Common myeloid progenitor, CD34-positive (primary cell): ENCODE measurements at regions of chr7 and their contacts with region 1.

Region 1: GRCh38 chr7:94087664-94088352 is 83.7 kb upstream of the BET1 start:
- DNase-seq: peak; percentile 64 to 78 (median 64)
- H3K4me3 ChIP-seq: peak overlapping the region in 1 of 7 experiments; percentile 50
- H3K27ac ChIP-seq: no peak overlapping the region
- H3K4me1 ChIP-seq: peaks cover 0 to 10% (median 5%) of the 10 kb centered on the region in 4 experiments
- H3K27me3 ChIP-seq: peaks cover 0 to 83% (median 28%) of the 10 kb centered on the region in 5 experiments

Region 2: GRCh38 chr7:93910076-93910994 is 177.5 kb before region 1 on chr7:
- CTCF ChIA-PET with region 1: interaction called, 12 read pairs
- POLR2A ChIA-PET with region 1: no interaction called
- DNase-seq: no peak
- H3K4me3 ChIP-seq: no peak overlapping the region
- H3K27ac ChIP-seq: no peak overlapping the region
- H3K4me1 ChIP-seq: no peaks in the 10 kb centered on the region
- H3K27me3 ChIP-seq: peaks cover 0 to 46% (median 7%) of the 10 kb centered on the region in 5 experiments

Region 3: GRCh38 chr7:93921607-93922566 is 165.9 kb before region 1 on chr7 and contains the start of gene GNG11:
- CTCF ChIA-PET with region 1: interaction called, 14 read pairs
- POLR2A ChIA-PET with region 1: no interaction called
- DNase-seq: peak; percentile 81 to 88 (median 85)
- H3K4me3 ChIP-seq: peak within 1 kb of the TSS; percentile 17 to 91 (median 80)
- H3K27ac ChIP-seq: peak within 1 kb of the TSS; percentile 60 to 78
- H3K4me1 ChIP-seq: peaks cover 10 to 29% (median 15%) of the 10 kb centered on the region in 4 experiments
- H3K27me3 ChIP-seq: peaks cover 0 to 48% (median 0%) of the 10 kb centered on the region in 5 experiments

Region 4: DNA sequence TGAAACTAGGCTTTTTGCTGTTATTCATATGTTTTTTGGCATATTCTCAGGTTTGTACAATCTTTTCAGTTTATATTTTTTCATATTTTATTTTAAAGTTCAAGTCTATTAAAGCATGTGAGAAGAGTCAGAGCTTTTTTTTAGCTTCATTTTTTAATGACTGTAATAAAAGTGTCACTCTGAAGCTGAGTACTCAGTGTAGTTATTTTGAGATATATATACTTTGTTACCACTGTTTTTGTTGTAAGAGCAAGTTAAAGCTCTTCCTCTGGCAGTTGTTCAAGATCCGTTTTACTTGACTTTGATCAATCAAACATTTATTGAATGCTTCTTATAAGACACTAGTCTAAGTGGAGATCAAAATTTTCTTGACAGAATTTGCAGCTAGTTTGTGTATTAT is 459.3 kb after region 1 on chr7:
- CTCF ChIA-PET with region 1: no interaction called
- POLR2A ChIA-PET with region 1: no interaction called
- DNase-seq: no peak
- H3K4me3 ChIP-seq: no peak overlapping the region
- H3K27ac ChIP-seq: no peak overlapping the region
- H3K4me1 ChIP-seq: no peaks in the 10 kb centered on the region
- H3K27me3 ChIP-seq: no peaks in the 10 kb centered on the region